ENCODE measurements at regions of chr19 and their contacts with region 1.

Region 1: DNA sequence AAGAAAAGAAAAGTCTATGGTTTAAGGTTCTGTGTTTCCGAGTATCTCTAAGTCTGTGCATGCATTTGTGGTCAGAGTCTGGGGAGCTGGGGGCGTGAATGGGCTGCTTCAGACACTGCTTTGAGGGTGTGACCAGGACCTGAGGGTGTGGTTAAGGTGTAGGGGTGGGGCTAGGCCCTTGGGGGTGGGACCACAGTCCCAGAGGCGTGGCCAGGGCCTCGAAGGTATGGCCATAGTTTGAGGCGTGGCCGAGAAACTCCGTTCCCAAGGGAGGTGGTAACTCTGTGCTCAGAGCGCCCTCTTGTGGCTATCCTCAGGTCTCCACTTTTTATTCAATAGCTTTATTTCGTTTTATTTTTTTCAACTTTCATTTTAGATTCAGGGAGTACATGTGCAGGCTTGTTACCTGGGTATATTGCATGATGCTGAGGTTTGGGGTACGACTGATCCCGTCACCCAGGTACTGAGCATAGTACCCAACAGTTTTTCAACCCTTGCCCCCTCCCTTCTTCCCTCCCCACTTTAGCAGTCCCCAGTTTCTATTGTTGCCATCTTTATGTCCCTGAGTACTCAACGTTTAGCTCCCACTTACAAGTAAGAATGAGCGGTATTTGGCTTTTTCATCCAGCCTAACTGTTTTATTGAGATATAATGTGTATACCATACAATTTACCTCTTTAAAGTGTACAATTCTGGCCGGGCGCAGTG is 7.0 kb upstream of the CBLC start:
- DNase-seq: peak; percentile 97 to 99
- ATAC-seq: peak; percentile 97

Region 2: DNA sequence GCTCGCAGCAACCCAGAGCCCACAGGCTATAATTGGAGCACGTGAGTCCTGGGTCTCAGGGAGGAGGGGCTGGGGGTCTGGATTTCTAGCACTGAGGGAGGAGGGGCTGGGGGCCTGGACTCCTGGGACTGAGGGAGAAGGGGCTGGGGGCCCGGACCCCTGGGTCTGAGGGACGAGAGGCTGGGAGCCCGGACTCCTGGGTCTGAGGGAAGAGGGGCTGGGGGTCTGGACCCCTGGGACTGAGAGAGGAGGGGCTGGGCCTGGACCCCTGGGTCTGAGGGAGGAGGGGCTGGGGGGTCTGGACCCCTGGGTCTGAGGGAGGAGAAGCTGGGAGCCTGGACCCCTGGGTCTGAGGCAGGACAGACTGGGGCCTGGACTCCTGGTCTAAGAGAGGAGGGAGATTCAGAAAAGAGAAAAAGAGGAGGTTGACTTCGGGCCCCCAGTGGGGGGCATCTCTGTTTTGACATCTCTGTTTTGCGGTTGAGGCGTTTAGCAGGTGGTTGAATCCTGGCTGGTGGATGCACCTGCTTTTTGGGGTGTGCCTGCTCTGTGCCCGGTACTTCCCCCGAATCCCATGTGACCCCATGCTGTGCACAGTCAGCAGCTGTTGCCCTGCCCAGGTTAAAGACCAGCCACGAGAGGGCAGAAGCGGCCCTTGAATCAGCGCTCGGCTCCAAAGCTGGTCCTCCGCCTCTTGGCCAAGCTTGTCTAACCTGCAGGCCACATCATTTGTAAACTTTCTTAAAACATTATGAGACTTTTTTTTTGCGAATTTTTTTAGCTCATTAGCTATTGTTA is 116.5 kb before region 1 on chr19:
- intact Hi-C with region 1: no loop called
- DNase-seq: peak; percentile 77 to 86
- ATAC-seq: peak; percentile 85

Region 3: DNA sequence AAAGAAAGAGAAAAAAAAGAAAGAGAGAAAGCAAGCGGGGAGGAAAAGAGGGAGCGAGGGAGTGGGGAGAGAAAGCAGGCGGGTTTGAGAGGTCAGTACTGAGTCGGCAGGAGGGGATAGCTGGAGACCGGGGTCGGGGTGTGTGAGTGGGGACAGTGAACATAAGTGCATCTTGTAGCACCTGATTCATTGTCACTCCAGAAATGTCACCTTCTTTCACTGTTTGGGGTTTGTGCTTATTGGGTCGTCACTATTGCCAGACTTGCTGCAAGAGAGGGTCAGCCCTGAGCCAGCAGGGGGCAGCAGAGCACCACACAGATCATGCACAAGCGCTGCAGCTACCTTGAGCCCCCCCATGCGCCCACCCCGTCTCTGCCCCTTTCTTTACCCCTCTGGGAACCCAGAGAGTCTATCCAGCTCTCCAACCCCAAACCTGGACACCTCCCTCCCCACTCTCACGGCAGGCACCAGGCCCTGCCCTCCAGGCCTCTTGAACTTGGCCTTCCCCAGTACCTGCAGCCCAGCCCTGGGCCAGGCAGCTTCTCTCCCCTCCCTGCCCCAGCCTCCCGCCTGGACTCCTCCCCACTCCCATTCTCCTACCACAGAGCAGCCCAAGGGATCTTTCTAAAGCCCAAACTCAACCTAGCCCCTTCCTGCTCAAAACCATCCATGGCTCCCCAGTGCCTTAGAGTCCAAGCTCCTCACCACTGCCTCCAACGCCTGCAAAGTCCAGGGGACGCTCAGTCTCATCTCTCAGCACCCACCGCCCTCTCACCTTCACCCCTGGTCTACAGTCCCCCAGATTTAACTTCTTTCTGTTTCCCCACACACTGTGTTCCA is 81.4 kb before region 1 on chr19:
- intact Hi-C with region 1: loop called in 1 of 2 experiments (anchors 5 kb)
- DNase-seq: peak; percentile 72 to 90
- ATAC-seq: peak; percentile 68

Region 4: GRCh38 chr19:44723952-44724319 is 46.8 kb before region 1 on chr19:
- intact Hi-C with region 1: loop called (anchors 5 to 10 kb)
- DNase-seq: peak; percentile 82 to 86
- ATAC-seq: peak; percentile 64

Region 5: DNA sequence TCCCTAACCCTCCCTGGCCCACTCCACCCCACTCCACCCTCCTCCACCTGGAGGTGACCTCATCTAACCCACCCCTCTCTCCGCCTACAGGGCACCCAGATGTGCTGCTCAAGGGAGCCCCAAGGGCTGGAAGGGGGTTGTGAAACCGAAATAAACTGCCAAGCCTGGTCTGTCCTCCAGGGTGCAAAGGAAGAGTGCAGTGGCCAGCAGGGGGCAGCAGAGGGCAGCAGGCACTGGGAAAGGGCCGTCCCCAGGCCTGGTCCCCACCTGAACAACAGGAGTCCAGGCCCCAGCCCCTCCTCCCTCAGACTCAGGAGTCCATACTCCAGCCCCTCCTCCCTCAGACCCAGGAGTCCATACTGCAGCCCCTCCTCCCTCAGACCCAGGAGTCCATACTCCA is 29.8 kb after region 1 on chr19:
- intact Hi-C with region 1: no loop called
- DNase-seq: peak; percentile 70 to 89
- ATAC-seq: peak; percentile 79

Region 6: GRCh38 chr19:44841231-44841630 is 70.5 kb after region 1 on chr19:
- intact Hi-C with region 1: no loop called
- DNase-seq: no peak
- ATAC-seq: no peak